Uterus (tissue), 4 donors: ENCODE measurements at regions of chr9 and their contacts with region 1.

Region 1: GRCh38 chr9:14314929-14315645 is 1.1 kb upstream of the NFIB start:
- DNase-seq: peak; percentile 94 to 96
- H3K4me3 ChIP-seq: peak overlapping the region; percentile 63 to 87
- H3K27ac ChIP-seq: peak overlapping the region; percentile 98 to 100
- H3K4me1 ChIP-seq: peaks cover 0 to 4% of the 10 kb centered on the region in 2 donors
- H3K27me3 ChIP-seq: no peaks in the 10 kb centered on the region
- CTCF ChIP-seq: peak in 2 of 4 experiments; percentile 1 to 5
- POLR2A ChIP-seq: peak; percentile 26 to 80

Region 2: GRCh38 chr9:13865869-13866268 is 449.2 kb before region 1 on chr9:
- intact Hi-C with region 1: no loop called
- DNase-seq: no peak
- H3K4me3 ChIP-seq: no peak overlapping the region
- H3K27ac ChIP-seq: no peak overlapping the region
- H3K4me1 ChIP-seq: no peaks in the 10 kb centered on the region
- H3K27me3 ChIP-seq: no peaks in the 10 kb centered on the region
- CTCF ChIP-seq: no peak
- POLR2A ChIP-seq: no peak

Region 3: GRCh38 chr9:14018081-14018480 is 297.0 kb before region 1 on chr9:
- intact Hi-C with region 1: no loop called
- DNase-seq: no peak
- H3K4me3 ChIP-seq: no peak overlapping the region
- H3K27ac ChIP-seq: no peak overlapping the region
- H3K4me1 ChIP-seq: no peaks in the 10 kb centered on the region
- H3K27me3 ChIP-seq: no peaks in the 10 kb centered on the region
- CTCF ChIP-seq: no peak
- POLR2A ChIP-seq: no peak

Region 4: DNA sequence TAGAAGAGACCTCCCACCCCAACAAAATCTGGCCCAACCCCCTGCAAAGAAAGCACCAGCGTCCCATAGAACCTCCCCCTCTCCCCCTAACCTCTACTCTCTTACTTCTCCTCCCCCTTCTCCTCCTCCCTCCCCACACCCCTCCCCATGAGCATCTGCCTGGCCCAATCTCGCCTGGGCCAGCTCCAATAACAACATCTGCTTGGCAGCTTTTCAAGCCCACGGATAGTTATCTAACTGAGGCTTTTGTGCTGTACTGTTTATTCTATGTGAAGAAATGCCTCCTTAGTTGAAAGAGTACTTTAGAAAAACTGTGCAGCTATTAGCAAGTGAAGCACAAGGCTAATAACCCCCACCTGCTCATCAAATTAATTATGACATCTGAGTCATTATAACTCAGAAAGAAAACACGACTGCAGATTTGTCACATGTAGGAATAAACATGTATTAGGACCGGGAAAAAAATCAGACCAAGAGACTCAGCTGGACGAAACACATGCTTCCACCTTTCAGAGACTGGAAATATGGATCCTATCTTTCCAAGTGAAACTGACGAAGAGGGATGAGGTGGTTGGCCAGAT is 43.9 kb before region 1 on chr9:
- intact Hi-C with region 1: loop called (anchors 5 kb)
- DNase-seq: peak; percentile 88 to 91
- H3K4me3 ChIP-seq: peak overlapping the region; percentile 10 to 13
- H3K27ac ChIP-seq: peak overlapping the region; percentile 74 to 78
- H3K4me1 ChIP-seq: peaks cover 0 to 12% of the 10 kb centered on the region in 2 donors
- H3K27me3 ChIP-seq: no peaks in the 10 kb centered on the region
- CTCF ChIP-seq: no peak
- POLR2A ChIP-seq: no peak

Region 5: GRCh38 chr9:14466429-14466818 is 151.3 kb after region 1 on chr9:
- intact Hi-C with region 1: no loop called
- DNase-seq: no peak
- H3K4me3 ChIP-seq: no peak overlapping the region
- H3K27ac ChIP-seq: no peak overlapping the region
- H3K4me1 ChIP-seq: no peaks in the 10 kb centered on the region
- H3K27me3 ChIP-seq: no peaks in the 10 kb centered on the region
- CTCF ChIP-seq: no peak
- POLR2A ChIP-seq: no peak